Endothelial cell of umbilical vein (primary cell): ENCODE measurements at regions of chr3 and their contacts with region 1.

Region 1: GRCh38 chr3:111071257-111072015 is at the start of gene NECTIN3:
- DNase-seq: peak; percentile 98
- H3K4me3 ChIP-seq: peak within 1 kb of the TSS; percentile 91 to 96 (median 96)
- H3K27ac ChIP-seq: peak within 1 kb of the TSS; percentile 82
- H3K4me1 ChIP-seq: peaks cover 23% of the 10 kb centered on the region
- H3K27me3 ChIP-seq: no peaks in the 10 kb centered on the region
- CTCF ChIP-seq: no peak
- POLR2A ChIP-seq: peak; percentile 54
- total RNA-seq, gene NECTIN3: 26.9 and 32.6 TPM in 2 replicates

Region 2: GRCh38 chr3:110343945-110344344 is 727.5 kb before region 1 on chr3:
- CTCF ChIA-PET with region 1: no interaction called
- POLR2A ChIA-PET with region 1: no interaction called
- dilution Hi-C with region 1: no loop called
- intact Hi-C with region 1: loop called (anchors 1 kb)
- DNase-seq: peak; percentile 9
- H3K4me3 ChIP-seq: no peak overlapping the region
- H3K27ac ChIP-seq: peak overlapping the region; percentile 0
- H3K4me1 ChIP-seq: peaks cover 21% of the 10 kb centered on the region
- H3K27me3 ChIP-seq: no peaks in the 10 kb centered on the region
- CTCF ChIP-seq: no peak
- POLR2A ChIP-seq: no peak

Region 3: DNA sequence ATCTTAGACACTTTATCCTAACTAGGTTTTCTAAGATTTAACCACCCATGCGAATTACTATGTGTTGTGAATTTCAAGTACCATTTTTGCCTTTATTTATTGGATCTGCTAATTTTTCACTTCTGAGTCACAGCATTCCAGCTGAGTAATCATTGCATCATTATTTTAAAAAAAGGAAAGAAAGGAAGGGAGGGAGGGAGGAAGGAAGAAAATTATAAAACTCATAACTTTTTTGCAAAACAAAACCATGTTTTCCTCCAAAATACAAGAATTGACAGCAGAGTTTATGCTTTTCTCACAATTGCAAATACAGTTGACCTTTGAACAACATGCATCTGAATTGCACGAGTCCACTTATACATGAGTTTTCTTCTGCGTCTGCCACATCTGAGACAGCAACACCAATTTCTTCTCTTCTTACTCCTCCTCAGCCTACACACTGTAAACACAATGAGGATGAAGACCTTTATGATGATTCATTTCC is 651.2 kb before region 1 on chr3:
- CTCF ChIA-PET with region 1: interaction called, 3 read pairs
- POLR2A ChIA-PET with region 1: no interaction called
- dilution Hi-C with region 1: no loop called
- intact Hi-C with region 1: loop called (anchors 1 kb)
- DNase-seq: peak; percentile 94
- H3K4me3 ChIP-seq: peak overlapping the region in 1 of 3 experiments; percentile 5
- H3K27ac ChIP-seq: peak overlapping the region; percentile 92
- H3K4me1 ChIP-seq: peaks cover 32% of the 10 kb centered on the region
- H3K27me3 ChIP-seq: no peaks in the 10 kb centered on the region
- CTCF ChIP-seq: no peak
- POLR2A ChIP-seq: no peak

Region 4: GRCh38 chr3:110521019-110521418 is 550.4 kb before region 1 on chr3:
- CTCF ChIA-PET with region 1: no interaction called
- POLR2A ChIA-PET with region 1: no interaction called
- dilution Hi-C with region 1: no loop called
- intact Hi-C with region 1: loop called (anchors 2 kb)
- DNase-seq: peak; percentile 97
- H3K4me3 ChIP-seq: no peak overlapping the region
- H3K27ac ChIP-seq: peak overlapping the region; percentile 76
- H3K4me1 ChIP-seq: peaks cover 18% of the 10 kb centered on the region
- H3K27me3 ChIP-seq: no peaks in the 10 kb centered on the region
- CTCF ChIP-seq: no peak
- POLR2A ChIP-seq: no peak

Region 5: GRCh38 chr3:111045564-111045963 is 25.9 kb before region 1 on chr3:
- CTCF ChIA-PET with region 1: no interaction called
- POLR2A ChIA-PET with region 1: no interaction called
- dilution Hi-C with region 1: no loop called
- intact Hi-C with region 1: no loop called
- DNase-seq: no peak
- H3K4me3 ChIP-seq: no peak overlapping the region
- H3K27ac ChIP-seq: no peak overlapping the region
- H3K4me1 ChIP-seq: no peaks in the 10 kb centered on the region
- H3K27me3 ChIP-seq: no peaks in the 10 kb centered on the region
- CTCF ChIP-seq: no peak
- POLR2A ChIP-seq: no peak

Region 6: GRCh38 chr3:111087924-111088469 is 16.6 kb after region 1 on chr3:
- CTCF ChIA-PET with region 1: no interaction called
- POLR2A ChIA-PET with region 1: no interaction called
- dilution Hi-C with region 1: no loop called
- intact Hi-C with region 1: no loop called
- DNase-seq: no peak
- H3K4me3 ChIP-seq: no peak overlapping the region
- H3K27ac ChIP-seq: no peak overlapping the region
- H3K4me1 ChIP-seq: no peaks in the 10 kb centered on the region
- H3K27me3 ChIP-seq: no peaks in the 10 kb centered on the region
- CTCF ChIP-seq: no peak
- POLR2A ChIP-seq: no peak

Region 7: GRCh38 chr3:111103807-111104206 is 32.4 kb after region 1 on chr3:
- CTCF ChIA-PET with region 1: no interaction called
- POLR2A ChIA-PET with region 1: interaction called, 11 read pairs
- dilution Hi-C with region 1: no loop called
- intact Hi-C with region 1: no loop called
- DNase-seq: no peak
- H3K4me3 ChIP-seq: no peak overlapping the region
- H3K27ac ChIP-seq: no peak overlapping the region
- H3K4me1 ChIP-seq: no peaks in the 10 kb centered on the region
- H3K27me3 ChIP-seq: no peaks in the 10 kb centered on the region
- CTCF ChIP-seq: no peak
- POLR2A ChIP-seq: no peak

Region 8: DNA sequence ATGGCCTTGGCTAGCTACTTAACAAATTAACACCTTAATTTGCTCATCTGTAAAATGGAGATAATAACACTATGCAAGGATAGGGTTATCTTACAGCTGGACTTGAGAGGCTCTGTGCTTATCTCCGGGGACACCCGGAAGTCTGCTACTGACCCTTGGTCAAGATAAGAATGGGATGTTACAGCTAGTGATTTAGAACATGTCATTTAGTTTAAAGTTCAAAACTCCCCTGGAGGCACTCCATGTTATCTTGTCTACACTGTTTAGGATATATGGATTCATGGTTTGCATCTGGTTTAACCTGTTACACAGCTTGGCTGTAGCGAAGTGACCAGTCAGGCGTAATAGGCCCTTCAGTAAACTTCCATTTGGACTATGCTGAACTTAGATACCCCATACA is 314.6 kb after region 1 on chr3:
- CTCF ChIA-PET with region 1: no interaction called
- POLR2A ChIA-PET with region 1: no interaction called
- dilution Hi-C with region 1: no loop called
- intact Hi-C with region 1: no loop called
- DNase-seq: no peak
- H3K4me3 ChIP-seq: no peak overlapping the region
- H3K27ac ChIP-seq: no peak overlapping the region
- H3K4me1 ChIP-seq: no peaks in the 10 kb centered on the region
- H3K27me3 ChIP-seq: no peaks in the 10 kb centered on the region
- CTCF ChIP-seq: no peak
- POLR2A ChIP-seq: no peak